Right ventricle myocardium superior (tissue), 1 donor: ENCODE measurements at regions of chrX and their contacts with region 1.

Region 1: GRCh38 chrX:43969504-43970501 is 3.4 kb downstream of the NDP start:
- DNase-seq: no peak
- ATAC-seq: no peak

Region 2: GRCh38 chrX:44025555-44025954 is 55.8 kb after region 1 on chrX:
- intact Hi-C with region 1: loop called (anchors 10 kb)
- DNase-seq: no peak
- ATAC-seq: no peak